SK-N-SH (cell line): ENCODE measurements at regions of chr5 and their contacts with region 1.

Region 1: GRCh38 chr5:148730943-148731861 is 76.9 kb upstream of the HTR4 start:
- DNase-seq: peak; percentile 52
- H3K4me3 ChIP-seq: no peak overlapping the region; a peak in 1 of 4 replicates
- H3K27ac ChIP-seq: peak overlapping the region in 1 of 2 experiments; percentile 56; a peak in 2 of 4 replicates
- H3K4me1 ChIP-seq: peaks cover 0 to 15% of the 10 kb centered on the region in 2 experiments; a peak in 3 of 4 replicates
- H3K27me3 ChIP-seq: no peaks in the 10 kb centered on the region
- CTCF ChIP-seq: peak; percentile 99
- EP300 ChIP-seq: no peak
- RAD21 ChIP-seq: peak; percentile 99

Region 2: DNA sequence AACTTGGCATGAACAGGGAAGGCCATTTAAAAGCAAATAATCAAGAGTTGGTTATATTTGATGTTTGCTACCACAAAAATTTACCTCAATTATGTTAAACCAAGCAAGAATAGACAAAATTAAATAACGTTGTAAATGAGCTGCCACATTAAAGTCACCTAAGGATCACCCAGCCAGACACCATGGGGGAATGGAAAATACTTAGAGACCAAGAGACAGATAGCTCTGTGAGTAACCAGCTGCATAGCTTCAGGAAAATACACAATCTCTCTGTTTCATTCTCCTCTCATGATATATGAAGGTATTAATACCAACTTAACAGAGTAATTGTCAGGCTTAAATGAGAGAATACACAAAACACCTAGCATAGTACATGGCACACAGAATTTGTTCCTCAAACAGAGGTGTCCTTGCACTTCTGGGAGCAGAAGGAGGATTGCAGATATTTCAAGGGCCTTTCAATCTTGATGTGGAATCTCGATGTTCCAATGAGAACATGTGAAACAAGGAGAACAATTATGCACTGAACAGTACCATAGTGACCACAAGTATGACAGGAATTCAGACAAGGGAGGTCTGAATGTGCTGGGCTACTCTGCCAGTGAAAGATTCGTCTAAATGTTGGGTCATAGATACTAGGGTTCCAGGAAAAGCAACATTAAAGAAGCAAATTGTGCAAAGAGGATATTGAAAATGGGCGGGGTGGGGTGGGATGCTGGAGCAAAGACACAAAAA is 967.2 kb before region 1 on chr5:
- CTCF ChIA-PET with region 1: no interaction called
- POLR2A ChIA-PET with region 1: no interaction called
- DNase-seq: no peak
- H3K4me3 ChIP-seq: no peak overlapping the region
- H3K27ac ChIP-seq: peak overlapping the region in 1 of 2 experiments; percentile 59; a peak in 2 of 4 replicates
- H3K4me1 ChIP-seq: peaks cover 0 to 10% of the 10 kb centered on the region in 2 experiments; a peak in 1 of 4 replicates
- H3K27me3 ChIP-seq: no peaks in the 10 kb centered on the region
- CTCF ChIP-seq: no peak
- EP300 ChIP-seq: no peak
- RAD21 ChIP-seq: no peak

Region 3: GRCh38 chr5:148186248-148186996 is 544.8 kb before region 1 on chr5:
- CTCF ChIA-PET with region 1: interaction called, 13 read pairs
- POLR2A ChIA-PET with region 1: no interaction called
- DNase-seq: no peak
- H3K4me3 ChIP-seq: no peak overlapping the region
- H3K27ac ChIP-seq: no peak overlapping the region
- H3K4me1 ChIP-seq: no peaks in the 10 kb centered on the region
- H3K27me3 ChIP-seq: no peaks in the 10 kb centered on the region
- CTCF ChIP-seq: no peak
- EP300 ChIP-seq: no peak
- RAD21 ChIP-seq: no peak

Region 4: GRCh38 chr5:148403344-148403743 is 327.9 kb before region 1 on chr5:
- CTCF ChIA-PET with region 1: interaction called, 17 read pairs
- POLR2A ChIA-PET with region 1: no interaction called
- DNase-seq: no peak
- H3K4me3 ChIP-seq: no peak overlapping the region
- H3K27ac ChIP-seq: no peak overlapping the region
- H3K4me1 ChIP-seq: peaks cover 0 to 13% of the 10 kb centered on the region in 2 experiments; a peak in 2 of 4 replicates
- H3K27me3 ChIP-seq: no peaks in the 10 kb centered on the region
- CTCF ChIP-seq: no peak
- EP300 ChIP-seq: no peak
- RAD21 ChIP-seq: no peak

Region 5: DNA sequence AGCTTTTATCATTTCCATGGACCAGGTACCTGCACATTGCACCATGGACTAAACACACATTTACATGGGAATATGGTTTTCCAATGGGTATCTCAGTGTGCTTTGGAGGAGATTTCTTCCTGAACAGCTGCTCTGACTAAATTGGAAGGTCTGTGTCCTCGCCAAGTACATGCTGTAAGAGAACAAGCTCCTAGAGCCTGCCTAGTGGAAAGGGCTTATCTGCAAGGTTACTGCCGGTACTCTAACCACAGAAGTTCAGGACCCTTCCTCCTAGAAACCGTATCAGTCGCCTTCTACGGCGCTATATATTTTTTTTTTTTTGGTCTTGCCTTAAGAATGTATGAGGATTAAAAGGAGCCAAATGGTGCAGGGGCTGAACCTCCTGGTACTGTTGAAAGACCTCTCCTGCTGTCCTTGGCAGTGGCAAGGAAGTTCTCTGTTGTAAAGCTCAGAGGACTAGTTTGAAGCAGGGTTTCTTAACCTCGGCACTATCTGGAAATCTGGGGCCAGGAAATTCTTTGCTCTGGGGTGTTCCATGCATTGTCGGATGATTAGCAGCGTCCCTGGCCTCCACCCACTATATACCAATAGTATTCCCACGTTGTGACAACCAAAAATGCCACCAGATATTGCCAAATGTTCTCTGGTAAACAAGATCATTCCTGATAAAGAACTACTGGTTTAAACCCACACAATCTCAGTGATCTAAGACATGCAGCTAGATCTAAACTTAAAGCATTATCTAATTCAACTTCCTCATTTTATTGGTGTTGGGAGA is 240.0 kb before region 1 on chr5:
- CTCF ChIA-PET with region 1: interaction called, 11 read pairs
- POLR2A ChIA-PET with region 1: no interaction called
- DNase-seq: no peak
- H3K4me3 ChIP-seq: no peak overlapping the region
- H3K27ac ChIP-seq: no peak overlapping the region
- H3K4me1 ChIP-seq: no peaks in the 10 kb centered on the region
- H3K27me3 ChIP-seq: no peaks in the 10 kb centered on the region; the same call in 1 of the 2 replicates
- CTCF ChIP-seq: no peak
- EP300 ChIP-seq: no peak
- RAD21 ChIP-seq: no peak

Region 6: GRCh38 chr5:148599187-148599586 is 132.0 kb before region 1 on chr5:
- CTCF ChIA-PET with region 1: no interaction called
- POLR2A ChIA-PET with region 1: no interaction called
- DNase-seq: no peak
- H3K4me3 ChIP-seq: no peak overlapping the region
- H3K27ac ChIP-seq: no peak overlapping the region
- H3K4me1 ChIP-seq: no peaks in the 10 kb centered on the region
- H3K27me3 ChIP-seq: no peaks in the 10 kb centered on the region
- CTCF ChIP-seq: no peak
- EP300 ChIP-seq: no peak
- RAD21 ChIP-seq: no peak

Region 7: DNA sequence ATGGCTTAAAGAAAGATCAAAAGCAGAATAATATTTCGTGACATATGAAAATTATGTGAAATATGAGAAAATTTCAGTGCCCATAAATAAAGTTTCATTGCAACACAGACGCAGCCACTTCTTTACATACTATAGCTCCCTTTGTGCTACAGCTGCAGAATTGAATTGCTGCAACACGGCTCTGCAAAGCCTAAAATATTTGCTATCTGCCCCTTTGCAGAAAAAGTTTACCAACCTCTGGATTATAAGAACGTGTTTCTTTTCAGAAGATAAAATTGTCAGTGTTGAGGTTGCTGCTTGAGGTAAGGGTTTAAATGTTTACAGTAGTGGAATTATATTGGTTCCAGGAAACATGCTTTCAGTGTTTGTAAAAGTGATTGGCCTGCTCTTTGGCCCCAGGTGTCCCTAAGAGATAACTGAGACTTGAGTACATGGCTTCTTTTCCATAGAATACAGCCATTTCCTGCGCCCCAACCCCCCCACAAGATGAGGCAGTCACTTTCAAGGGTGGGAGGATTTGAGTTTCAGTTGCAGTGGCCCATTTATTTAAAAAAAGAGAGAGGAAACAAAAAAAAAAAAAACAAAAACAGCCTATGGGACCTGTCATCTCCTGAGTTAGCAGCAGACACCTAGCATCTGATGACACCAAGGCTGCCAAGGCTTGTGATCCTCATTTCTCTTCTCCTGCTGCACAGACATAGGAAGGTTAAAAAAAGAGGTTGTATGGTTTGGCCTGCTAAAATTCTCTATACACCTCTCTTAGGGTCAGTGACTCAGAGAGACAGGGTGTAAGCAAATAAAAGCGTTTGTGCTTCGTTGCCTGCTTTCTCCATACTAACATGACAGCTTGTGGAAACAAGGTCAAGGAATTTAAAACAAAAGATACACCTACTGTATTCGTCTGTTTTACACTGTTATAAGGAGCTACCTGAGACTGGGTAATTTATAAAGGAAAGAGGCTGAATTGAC is 48.9 kb before region 1 on chr5:
- CTCF ChIA-PET with region 1: interaction called, 17 read pairs
- POLR2A ChIA-PET with region 1: no interaction called
- DNase-seq: no peak
- H3K4me3 ChIP-seq: no peak overlapping the region
- H3K27ac ChIP-seq: no peak overlapping the region
- H3K4me1 ChIP-seq: peaks cover 0 to 4% of the 10 kb centered on the region in 2 experiments; a peak in 2 of 4 replicates
- H3K27me3 ChIP-seq: no peaks in the 10 kb centered on the region; the same call in 1 of the 2 replicates
- CTCF ChIP-seq: no peak
- EP300 ChIP-seq: no peak
- RAD21 ChIP-seq: no peak

Region 8: DNA sequence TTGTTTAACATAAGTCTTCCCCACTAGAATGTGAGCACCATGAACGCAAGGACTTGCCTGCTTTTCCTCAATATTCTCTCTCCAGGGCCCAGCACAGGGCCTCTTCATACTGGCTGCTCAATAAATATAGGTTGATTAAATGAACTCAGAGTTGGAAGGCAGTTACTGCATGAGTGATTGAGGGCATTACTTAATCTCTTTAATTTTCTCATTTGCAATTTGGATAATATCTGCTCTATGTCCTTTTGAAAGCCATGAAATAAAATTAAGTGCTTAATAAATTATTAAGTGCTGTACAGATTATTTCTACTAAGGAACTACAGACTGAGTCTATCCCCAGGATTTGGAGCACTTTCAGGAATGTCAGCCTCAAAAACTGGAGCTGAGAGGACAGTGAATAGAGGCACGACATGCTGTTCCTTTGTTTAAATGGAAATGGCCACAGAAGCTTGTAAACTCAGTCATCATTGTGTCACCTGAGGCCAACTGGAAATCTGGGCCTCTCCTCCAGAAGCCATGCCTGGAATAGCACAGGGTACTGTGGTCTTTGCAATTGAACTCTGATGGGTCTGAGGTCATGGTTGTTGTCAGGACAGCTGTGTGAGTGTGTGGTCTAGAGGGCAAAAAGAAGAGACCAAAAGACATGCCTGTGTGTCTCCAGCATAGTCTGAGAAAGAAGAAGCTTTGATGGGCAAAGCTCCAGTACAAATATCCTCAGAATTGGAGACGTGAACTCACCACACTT is 245.5 kb after region 1 on chr5:
- CTCF ChIA-PET with region 1: interaction called, 10 read pairs
- POLR2A ChIA-PET with region 1: no interaction called
- DNase-seq: no peak
- H3K4me3 ChIP-seq: no peak overlapping the region
- H3K27ac ChIP-seq: peak overlapping the region in 1 of 2 experiments; percentile 79; a peak in 3 of 4 replicates
- H3K4me1 ChIP-seq: peaks cover 10 to 39% of the 10 kb centered on the region in 2 experiments
- H3K27me3 ChIP-seq: no peaks in the 10 kb centered on the region
- CTCF ChIP-seq: no peak
- EP300 ChIP-seq: 0 out of 4 replicates have a peak, but pooled peaks of 1 of the 2 experiments have one; percentile 21
- RAD21 ChIP-seq: no peak

Region 9: DNA sequence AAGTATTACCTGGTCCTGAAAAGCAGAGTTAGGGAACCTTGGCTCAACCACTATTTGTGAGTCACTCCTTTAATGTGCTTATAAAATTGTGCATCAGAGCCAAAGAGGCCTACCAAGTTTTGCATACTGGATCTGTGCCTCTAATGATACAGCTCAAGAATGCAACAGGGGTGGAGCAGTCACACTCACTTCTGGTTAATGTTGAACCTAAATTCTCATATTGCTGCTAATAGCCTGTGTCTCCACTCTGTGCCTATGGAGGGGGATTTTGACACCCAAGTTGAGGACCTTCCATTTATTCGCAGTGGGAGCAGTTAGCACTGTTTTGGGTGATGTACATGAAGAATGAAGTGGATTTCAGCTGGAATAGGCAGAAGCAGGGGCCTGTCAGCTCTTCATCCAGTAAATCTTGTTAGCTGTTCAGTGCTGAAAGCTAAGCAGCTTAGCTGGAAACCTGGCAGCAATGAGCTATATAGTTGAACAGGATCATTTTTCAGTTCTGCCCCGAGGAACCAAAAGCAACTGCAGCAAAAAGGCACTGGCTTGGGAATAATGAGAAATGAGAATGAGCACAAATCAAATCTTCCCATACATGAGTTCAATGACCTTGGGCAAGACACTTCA is 322.0 kb after region 1 on chr5:
- CTCF ChIA-PET with region 1: interaction called, 19 read pairs
- POLR2A ChIA-PET with region 1: no interaction called
- DNase-seq: no peak
- H3K4me3 ChIP-seq: no peak overlapping the region
- H3K27ac ChIP-seq: peak overlapping the region in 1 of 2 experiments; percentile 39; a peak in 1 of 4 replicates
- H3K4me1 ChIP-seq: peaks cover 0 to 10% of the 10 kb centered on the region in 2 experiments; a peak in 2 of 4 replicates
- H3K27me3 ChIP-seq: no peaks in the 10 kb centered on the region
- CTCF ChIP-seq: no peak
- EP300 ChIP-seq: no peak
- RAD21 ChIP-seq: no peak